ENCODE measurements at regions of chr2 and their contacts with region 1.

Region 1: GRCh38 chr2:165193178-165193777 is 10.6 kb downstream of the SCN3A start:
- DNase-seq: no peak
- H3K4me3 ChIP-seq: no peak overlapping the region
- H3K4me1 ChIP-seq: no peaks in the 10 kb centered on the region
- H3K27me3 ChIP-seq: peaks cover 4% of the 10 kb centered on the region; the same call in 1 of the 2 replicates

Region 2: DNA sequence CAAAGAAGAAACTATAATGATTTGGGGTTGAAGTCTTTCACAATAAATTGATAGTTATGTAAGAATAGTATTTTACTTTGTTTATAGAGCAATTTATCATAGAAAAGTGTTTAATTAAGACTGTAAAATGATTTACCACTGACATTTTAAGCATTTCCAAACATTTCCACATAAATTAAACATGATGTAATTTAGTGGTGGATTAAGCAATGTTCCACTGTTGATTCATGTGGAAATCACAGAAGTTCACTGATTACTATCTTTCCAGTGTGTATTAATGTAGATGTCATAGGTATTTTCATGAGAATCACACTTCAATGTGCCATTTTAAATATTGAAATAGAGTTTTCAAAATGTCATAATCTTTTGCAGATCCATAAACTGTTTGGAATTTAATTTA is 531.9 kb before region 1 on chr2:
- in situ Hi-C with region 1: no loop called
- DNase-seq: no peak
- H3K4me3 ChIP-seq: no peak overlapping the region
- H3K4me1 ChIP-seq: peaks cover 10% of the 10 kb centered on the region
- H3K27me3 ChIP-seq: no peaks in the 10 kb centered on the region

Region 3: DNA sequence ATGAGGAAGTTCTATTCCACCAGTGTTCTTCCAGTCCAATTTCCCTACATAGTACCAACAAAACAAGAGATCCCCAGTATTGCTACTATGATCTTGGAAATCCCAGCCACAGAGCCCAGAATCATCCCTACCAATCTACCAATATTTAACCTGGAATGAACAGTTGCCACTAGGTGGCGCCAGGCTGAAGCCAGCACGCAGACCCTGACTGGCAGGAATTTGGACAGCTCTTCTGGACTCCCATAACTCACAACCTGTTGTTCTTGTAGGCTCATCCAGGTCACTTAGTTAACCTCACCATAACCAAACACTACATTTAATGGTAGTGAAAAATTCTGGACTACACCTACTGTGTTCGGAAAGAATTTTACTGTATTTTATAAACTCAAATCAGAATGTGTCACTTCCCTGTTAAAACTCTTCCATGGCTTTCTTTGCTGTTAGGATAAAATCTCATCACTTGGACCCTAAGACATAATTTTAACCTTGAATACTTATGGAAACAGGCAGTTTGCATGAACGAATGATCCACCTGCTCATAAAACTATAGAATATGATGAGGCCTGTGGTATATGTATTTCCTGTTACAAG is 178.1 kb before region 1 on chr2:
- in situ Hi-C with region 1: loop called (anchors 25 kb)
- DNase-seq: peak; percentile 72 to 86
- H3K4me3 ChIP-seq: no peak overlapping the region
- H3K4me1 ChIP-seq: no peaks in the 10 kb centered on the region; the same call in 1 of the 2 replicates
- H3K27me3 ChIP-seq: peaks cover 4% of the 10 kb centered on the region; the same call in 1 of the 2 replicates